ENCODE measurements at regions of chr6 and their contacts with region 1.

Region 1: DNA sequence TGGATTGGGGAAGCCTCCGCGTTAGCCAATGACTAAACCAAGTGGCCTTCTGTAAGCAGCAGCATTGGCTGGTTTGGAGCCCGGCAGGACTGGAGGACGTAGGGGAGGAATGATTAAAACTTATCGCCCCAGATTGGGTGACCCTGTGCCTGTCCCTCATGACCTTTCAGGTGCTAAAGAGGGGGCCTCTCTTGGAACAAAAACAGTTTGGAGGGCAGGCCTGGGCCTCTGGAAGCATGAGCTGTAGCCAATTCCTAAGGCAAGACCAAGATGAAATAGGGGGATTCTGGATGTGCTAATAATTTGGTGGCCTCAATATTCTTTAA is 1.4 kb downstream of the GMPR start:
- DNase-seq: peak; percentile 79
- ATAC-seq: no peak

Region 2: GRCh38 chr6:16277101-16277981 is 37.6 kb after region 1 on chr6:
- intact Hi-C with region 1: loop called in 1 of 2 experiments (anchors 5 kb)
- DNase-seq: peak; percentile 79
- ATAC-seq: peak; percentile 90 to 92

Region 3: GRCh38 chr6:16759646-16760513 is 520.1 kb after region 1 on chr6:
- intact Hi-C with region 1: no loop called
- DNase-seq: peak; percentile 94
- ATAC-seq: peak; percentile 82 to 89

Measured in left cardiac atrium (tissue), 4 donors.